Activated naive CD4-positive, alpha-beta T cell treated with anti-CD3 and anti-CD28 coated beads for 36 hours (primary cell): ENCODE measurements at regions of chr12 and their contacts with region 1.

Region 1: GRCh38 chr12:63843721-63844390 is 644 bp upstream of the SRGAP1 start:
- DNase-seq: peak; percentile 84
- H3K4me3 Mint-ChIP-seq: peak overlapping the region; percentile 62
- H3K27ac Mint-ChIP-seq: no peak overlapping the region
- H3K4me1 Mint-ChIP-seq: peaks cover 6% of the 10 kb centered on the region
- H3K27me3 Mint-ChIP-seq: peaks cover 31% of the 10 kb centered on the region

Region 2: GRCh38 chr12:63779498-63780481 is 64.1 kb before region 1 on chr12 and contains the start of gene RXYLT1:
- CTCF ChIA-PET with region 1: no interaction called
- intact Hi-C with region 1: loop called (anchors 5 kb)
- DNase-seq: peak; percentile 85
- H3K4me3 Mint-ChIP-seq: peak within 1 kb of the TSS; percentile 98
- H3K27ac Mint-ChIP-seq: peak within 1 kb of the TSS; percentile 91
- H3K4me1 Mint-ChIP-seq: peaks cover 18% of the 10 kb centered on the region
- H3K27me3 Mint-ChIP-seq: no peaks in the 10 kb centered on the region
- total RNA-seq, gene RXYLT1: 9.8 to 12.7 TPM

Region 3: GRCh38 chr12:63978519-63978918 is 134.7 kb after region 1 on chr12:
- CTCF ChIA-PET with region 1: no interaction called
- intact Hi-C with region 1: no loop called
- DNase-seq: no peak
- H3K4me3 Mint-ChIP-seq: no peak overlapping the region
- H3K27ac Mint-ChIP-seq: no peak overlapping the region
- H3K4me1 Mint-ChIP-seq: no peaks in the 10 kb centered on the region
- H3K27me3 Mint-ChIP-seq: peaks cover 2% of the 10 kb centered on the region

Region 4: GRCh38 chr12:64222009-64222765 is 378.3 kb after region 1 on chr12 and contains the start of gene KICS2:
- CTCF ChIA-PET with region 1: no interaction called
- intact Hi-C with region 1: loop called (anchors 1 kb)
- DNase-seq: peak; percentile 92
- H3K4me3 Mint-ChIP-seq: peak within 1 kb of the TSS; percentile 92
- H3K27ac Mint-ChIP-seq: peak within 1 kb of the TSS; percentile 91
- H3K4me1 Mint-ChIP-seq: peaks cover 26% of the 10 kb centered on the region
- H3K27me3 Mint-ChIP-seq: no peaks in the 10 kb centered on the region
- total RNA-seq, gene KICS2: 13.3 to 15.6 TPM

Region 5: DNA sequence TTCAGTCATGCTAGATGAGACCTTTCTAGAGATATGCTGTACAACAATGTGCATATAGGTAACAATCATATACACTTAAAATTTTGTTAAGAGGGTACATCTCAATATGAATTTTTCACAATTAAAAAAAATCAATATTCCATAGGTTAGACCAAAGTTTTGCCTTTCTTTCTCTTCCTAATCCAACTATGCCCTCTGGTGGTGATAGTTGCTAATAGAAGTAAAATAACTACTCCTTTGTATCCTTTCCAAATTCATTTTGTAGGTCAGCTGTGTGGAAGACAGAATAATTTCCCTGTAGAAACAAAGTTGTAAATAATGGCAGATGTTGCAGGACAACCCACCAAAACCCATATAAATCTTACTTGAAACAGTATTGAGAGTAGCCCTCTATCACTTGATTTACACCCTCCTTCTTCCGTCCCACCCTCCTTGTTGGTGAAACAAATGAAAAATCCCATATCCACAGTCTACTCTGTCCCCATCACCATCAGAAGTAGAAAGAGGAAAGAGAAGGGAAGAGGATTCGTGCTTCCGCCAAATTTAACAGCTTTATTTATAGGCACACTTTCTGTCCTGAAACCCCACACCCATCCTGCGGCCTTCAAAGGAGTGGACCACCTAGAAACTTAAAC is 412.4 kb after region 1 on chr12:
- CTCF ChIA-PET with region 1: interaction called, 3 read pairs
- intact Hi-C with region 1: loop called (anchors 1 kb)
- DNase-seq: no peak
- H3K4me3 Mint-ChIP-seq: no peak overlapping the region
- H3K27ac Mint-ChIP-seq: no peak overlapping the region
- H3K4me1 Mint-ChIP-seq: no peaks in the 10 kb centered on the region
- H3K27me3 Mint-ChIP-seq: no peaks in the 10 kb centered on the region

Region 6: DNA sequence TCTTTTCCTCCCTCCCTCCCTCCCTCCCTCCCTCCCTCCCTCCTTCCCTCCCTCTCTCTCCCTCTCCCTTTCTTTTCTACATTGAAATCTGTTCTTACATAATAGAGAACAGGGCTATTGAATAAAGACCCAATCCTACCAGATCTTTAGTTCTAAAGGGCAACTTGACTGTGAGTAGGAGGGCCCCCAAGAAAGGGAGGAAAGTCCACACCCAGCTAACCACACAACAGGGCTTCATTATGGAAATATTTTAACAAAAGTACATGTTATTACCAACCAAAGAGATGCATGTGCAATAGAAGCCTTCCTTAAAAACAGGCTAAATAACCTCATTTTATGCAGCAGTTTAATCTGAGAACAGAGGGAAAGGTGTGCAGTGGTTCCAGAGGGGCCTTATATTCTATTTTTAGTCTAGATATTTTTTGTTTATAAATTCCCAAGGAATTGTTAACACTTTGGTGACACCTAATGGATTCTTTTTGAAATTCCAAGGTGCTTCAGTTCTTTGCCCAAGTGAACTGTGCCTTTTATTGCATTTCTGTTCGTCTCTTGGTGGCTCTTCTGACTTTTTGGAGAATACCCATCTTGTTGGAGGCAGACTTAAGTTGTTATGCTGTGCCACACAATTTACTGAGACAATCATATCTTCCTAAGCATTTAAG is 852.4 kb after region 1 on chr12:
- CTCF ChIA-PET with region 1: no interaction called
- intact Hi-C with region 1: loop called (anchors 5 kb)
- DNase-seq: no peak
- H3K4me3 Mint-ChIP-seq: no peak overlapping the region
- H3K27ac Mint-ChIP-seq: peak overlapping the region; percentile 40
- H3K4me1 Mint-ChIP-seq: peaks cover 75% of the 10 kb centered on the region
- H3K27me3 Mint-ChIP-seq: no peaks in the 10 kb centered on the region